ENCODE measurements at regions of chr1 and their contacts with region 1.

Region 1: DNA sequence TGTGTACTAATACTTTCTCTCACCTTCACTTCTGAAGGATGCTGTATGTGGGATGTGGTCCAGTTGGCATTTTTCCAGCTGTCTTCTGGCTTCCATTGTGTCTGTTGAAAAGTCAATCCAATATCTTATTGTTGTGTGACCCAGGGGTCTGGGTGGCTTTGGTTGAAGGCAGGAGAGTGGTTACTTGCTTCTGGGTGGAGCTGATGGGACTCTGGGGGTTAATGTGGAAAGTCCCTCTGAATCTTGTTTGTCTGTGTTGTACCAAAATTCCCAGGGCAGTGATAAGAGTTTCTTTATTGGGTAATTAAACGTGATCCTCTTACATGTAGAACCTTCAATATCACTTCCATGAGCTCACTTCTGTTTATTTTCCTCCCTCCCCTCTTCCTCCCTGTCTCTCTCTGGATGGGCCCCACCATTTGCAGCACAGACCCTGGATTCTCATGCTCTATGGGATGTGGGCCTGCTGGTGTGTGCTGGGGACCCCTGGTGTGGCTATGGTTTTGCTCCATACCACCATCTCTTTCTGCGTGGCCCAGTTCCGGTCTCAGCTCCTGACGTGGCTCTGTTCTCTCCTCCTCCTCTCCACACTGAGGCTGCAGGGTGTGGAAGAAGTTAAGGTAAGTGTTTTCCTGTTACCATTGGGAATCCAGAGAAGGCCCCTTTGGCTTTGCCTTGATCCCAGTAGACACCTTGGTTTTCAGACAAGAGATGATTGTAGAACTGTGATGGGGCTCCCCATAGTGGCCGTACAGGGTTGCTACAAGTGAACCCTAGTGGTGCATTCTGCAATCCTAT is 71.5 kb downstream of the HHAT start:
- DNase-seq: peak; percentile 45 to 66 (median 57)
- ATAC-seq: peak; percentile 98
- H3K4me3 ChIP-seq: no peak overlapping the region
- H3K27ac ChIP-seq: no peak overlapping the region
- H3K4me1 ChIP-seq: no peaks in the 10 kb centered on the region
- H3K27me3 ChIP-seq: no peaks in the 10 kb centered on the region; a peak in 1 of 5 replicates
- CTCF ChIP-seq: peak; percentile 75 to 93 (median 84)
- EP300 ChIP-seq: no peak
- POLR2A ChIP-seq: no peak
- RAD21 ChIP-seq: peak; percentile 38 to 71; a peak in 3 of 4 replicates

Region 2: DNA sequence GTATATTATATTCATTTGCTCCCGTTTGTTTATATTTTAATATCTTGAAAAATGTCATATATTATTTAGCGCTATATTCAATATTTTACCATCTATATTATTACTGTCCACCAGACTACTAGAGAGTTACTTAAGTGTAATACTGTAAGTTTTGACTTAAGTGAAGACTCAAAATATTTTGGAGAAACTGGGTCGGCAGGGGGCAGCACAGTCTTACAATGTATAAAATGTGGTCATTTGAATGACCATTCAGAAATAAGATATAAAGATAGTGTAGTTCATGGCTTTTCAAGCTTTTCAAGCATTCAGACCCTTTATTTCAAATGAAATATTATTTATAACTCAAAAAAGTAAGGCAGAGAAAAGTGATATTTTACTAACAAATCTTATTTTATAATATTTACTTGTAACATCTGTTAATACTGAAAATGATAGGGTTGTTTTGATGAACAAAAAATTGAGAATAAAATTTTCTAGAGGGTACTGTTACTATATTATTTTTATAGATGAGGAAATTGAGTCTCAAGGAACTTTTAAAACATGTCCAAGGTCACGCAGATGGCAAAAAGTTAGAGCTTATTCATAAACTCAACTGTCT is 256.7 kb before region 1 on chr1:
- CTCF ChIA-PET with region 1: no interaction called
- POLR2A ChIA-PET with region 1: no interaction called
- in situ Hi-C with region 1: no loop called
- intact Hi-C with region 1: loop called (anchors 1 kb)
- DNase-seq: peak; percentile 40 to 73 (median 45)
- ATAC-seq: peak; percentile 64
- H3K4me3 ChIP-seq: no peak overlapping the region
- H3K27ac ChIP-seq: no peak overlapping the region
- H3K4me1 ChIP-seq: no peaks in the 10 kb centered on the region
- H3K27me3 ChIP-seq: no peaks in the 10 kb centered on the region
- CTCF ChIP-seq: peak; percentile 47 to 75 (median 49); a peak in 4 of 6 replicates
- EP300 ChIP-seq: no peak
- POLR2A ChIP-seq: no peak
- RAD21 ChIP-seq: peak; percentile 81

Region 3: GRCh38 chr1:210360852-210361477 is 39.3 kb before region 1 on chr1:
- CTCF ChIA-PET with region 1: interaction called, 3 read pairs
- POLR2A ChIA-PET with region 1: no interaction called
- in situ Hi-C with region 1: no loop called
- intact Hi-C with region 1: loop called (anchors 1 kb)
- DNase-seq: peak in 2 of 4 experiments; percentile 24
- ATAC-seq: peak; percentile 82
- H3K4me3 ChIP-seq: no peak overlapping the region
- H3K27ac ChIP-seq: no peak overlapping the region
- H3K4me1 ChIP-seq: no peaks in the 10 kb centered on the region
- H3K27me3 ChIP-seq: peaks cover 0 to 4% of the 10 kb centered on the region in 2 experiments; a peak in 1 of 5 replicates
- CTCF ChIP-seq: peak; percentile 3 to 55 (median 41); a peak in 4 of 6 replicates
- EP300 ChIP-seq: no peak
- POLR2A ChIP-seq: no peak
- RAD21 ChIP-seq: no peak

Region 4: GRCh38 chr1:210438928-210439809 is 38.9 kb after region 1 on chr1:
- CTCF ChIA-PET with region 1: no interaction called
- POLR2A ChIA-PET with region 1: no interaction called
- in situ Hi-C with region 1: no loop called
- intact Hi-C with region 1: no loop called
- DNase-seq: no peak
- ATAC-seq: no peak
- H3K4me3 ChIP-seq: no peak overlapping the region
- H3K27ac ChIP-seq: no peak overlapping the region
- H3K4me1 ChIP-seq: no peaks in the 10 kb centered on the region
- H3K27me3 ChIP-seq: no peaks in the 10 kb centered on the region
- CTCF ChIP-seq: no peak
- EP300 ChIP-seq: no peak
- POLR2A ChIP-seq: no peak
- RAD21 ChIP-seq: no peak

Region 5: DNA sequence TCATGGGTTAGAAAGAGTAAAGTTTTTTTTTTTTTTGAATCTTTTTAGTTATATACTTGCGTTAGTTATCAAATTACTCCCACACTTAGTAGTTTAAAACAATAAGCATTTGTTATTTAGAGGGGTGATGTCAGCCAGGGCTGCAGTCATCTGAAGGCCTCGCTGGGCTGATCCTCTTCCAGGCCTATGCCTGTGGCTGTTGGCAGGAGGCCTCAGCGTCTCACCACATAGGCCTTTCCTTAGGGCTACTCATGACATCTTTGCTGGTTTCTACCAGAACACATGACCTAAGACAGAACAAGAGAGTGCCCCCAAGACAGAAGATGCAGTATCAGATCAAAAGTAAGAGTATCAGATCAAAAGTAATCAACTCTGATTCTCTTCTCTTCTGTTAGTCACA is 95.8 kb after region 1 on chr1:
- CTCF ChIA-PET with region 1: no interaction called
- POLR2A ChIA-PET with region 1: no interaction called
- in situ Hi-C with region 1: no loop called
- intact Hi-C with region 1: no loop called
- DNase-seq: no peak
- ATAC-seq: no peak
- H3K4me3 ChIP-seq: no peak overlapping the region
- H3K27ac ChIP-seq: no peak overlapping the region
- H3K4me1 ChIP-seq: no peaks in the 10 kb centered on the region
- H3K27me3 ChIP-seq: no peaks in the 10 kb centered on the region
- CTCF ChIP-seq: no peak
- EP300 ChIP-seq: no peak
- POLR2A ChIP-seq: no peak
- RAD21 ChIP-seq: no peak